ENCODE measurements at regions of chr10 and their contacts with region 1.

Region 1: DNA sequence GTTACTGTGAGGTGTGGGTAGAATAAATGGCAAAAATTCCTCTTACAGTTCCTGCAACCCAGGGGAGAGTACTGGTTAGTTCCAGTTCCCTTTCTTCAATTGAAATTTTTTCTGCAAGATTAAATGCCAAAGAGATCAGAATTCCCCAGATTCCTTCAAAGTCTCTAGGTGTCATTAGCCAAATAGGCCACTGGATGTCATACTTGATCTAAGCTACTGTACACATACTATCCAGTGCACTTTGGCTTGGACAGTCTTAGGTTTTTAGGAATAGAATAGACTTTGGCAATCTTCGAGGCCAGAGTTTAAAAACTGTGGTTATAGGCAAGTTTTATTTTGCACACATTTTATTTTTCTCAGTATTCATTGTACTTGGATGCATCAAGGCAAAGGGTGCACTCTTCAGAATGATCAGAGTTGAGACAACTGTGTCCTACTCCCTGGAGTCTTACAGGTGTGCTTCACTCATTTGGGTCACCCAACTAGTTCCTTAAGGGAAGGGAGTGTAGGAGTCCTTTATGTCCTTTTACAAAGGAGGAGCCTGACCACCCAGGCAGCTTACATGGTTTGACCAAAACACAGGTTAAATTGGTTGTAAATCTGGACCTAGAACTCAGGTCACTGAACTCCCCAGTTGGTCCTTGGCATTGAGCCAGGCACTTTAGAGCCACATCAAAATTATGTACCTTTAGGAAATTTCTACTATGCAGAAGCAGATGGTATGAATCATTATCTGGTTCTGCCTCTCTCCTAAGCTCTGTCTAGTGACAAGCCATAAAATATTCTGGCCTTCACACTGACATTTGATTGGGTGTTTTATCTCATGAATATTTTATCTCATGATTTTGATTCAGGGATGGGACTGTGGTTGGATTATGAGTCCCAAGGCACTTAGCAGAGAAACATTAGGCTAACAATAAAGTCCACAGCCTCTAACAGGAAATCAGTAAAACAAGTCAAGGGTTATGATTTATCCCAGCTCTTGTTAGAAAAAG is 49.5 kb downstream of the ASAH2B start:
- DNase-seq: peak; percentile 51
- ATAC-seq: peak; percentile 98
- H3K4me3 ChIP-seq: no peak overlapping the region
- H3K27ac ChIP-seq: no peak overlapping the region
- H3K4me1 ChIP-seq: no peaks in the 10 kb centered on the region
- H3K27me3 ChIP-seq: no peaks in the 10 kb centered on the region
- CTCF ChIP-seq: peak; percentile 70 to 79 (median 73)
- POLR2A ChIP-seq: no peak
- RAD21 ChIP-seq: peak; percentile 88

Region 2: GRCh38 chr10:50896721-50897120 is 107.5 kb after region 1 on chr10:
- CTCF ChIA-PET with region 1: interaction called, 4 read pairs
- POLR2A ChIA-PET with region 1: no interaction called
- RAD21 ChIA-PET with region 1: no interaction called
- intact Hi-C with region 1: loop called (anchors 1 kb)
- DNase-seq: no peak
- ATAC-seq: no peak
- H3K4me3 ChIP-seq: no peak overlapping the region
- H3K27ac ChIP-seq: no peak overlapping the region
- H3K4me1 ChIP-seq: no peaks in the 10 kb centered on the region
- H3K27me3 ChIP-seq: no peaks in the 10 kb centered on the region
- CTCF ChIP-seq: no peak
- POLR2A ChIP-seq: no peak
- RAD21 ChIP-seq: no peak

Measured in HCT116 (cell line).